K562 (cell line): ENCODE measurements at regions of chrX and their contacts with region 1.

Region 1: GRCh38 chrX:11151799-11152559 is 40.8 kb downstream of the HCCS start:
- DNase-seq: no peak
- ATAC-seq: peak; percentile 68
- H3K4me3 ChIP-seq: no peak overlapping the region
- H3K27ac ChIP-seq: no peak overlapping the region
- H3K4me1 ChIP-seq: no peaks in the 10 kb centered on the region; a peak in 1 of 5 replicates
- H3K27me3 ChIP-seq: no peaks in the 10 kb centered on the region
- CTCF ChIP-seq: no peak
- EP300 ChIP-seq: no peak
- POLR2A ChIP-seq: no peak
- RAD21 ChIP-seq: no peak

Region 2: DNA sequence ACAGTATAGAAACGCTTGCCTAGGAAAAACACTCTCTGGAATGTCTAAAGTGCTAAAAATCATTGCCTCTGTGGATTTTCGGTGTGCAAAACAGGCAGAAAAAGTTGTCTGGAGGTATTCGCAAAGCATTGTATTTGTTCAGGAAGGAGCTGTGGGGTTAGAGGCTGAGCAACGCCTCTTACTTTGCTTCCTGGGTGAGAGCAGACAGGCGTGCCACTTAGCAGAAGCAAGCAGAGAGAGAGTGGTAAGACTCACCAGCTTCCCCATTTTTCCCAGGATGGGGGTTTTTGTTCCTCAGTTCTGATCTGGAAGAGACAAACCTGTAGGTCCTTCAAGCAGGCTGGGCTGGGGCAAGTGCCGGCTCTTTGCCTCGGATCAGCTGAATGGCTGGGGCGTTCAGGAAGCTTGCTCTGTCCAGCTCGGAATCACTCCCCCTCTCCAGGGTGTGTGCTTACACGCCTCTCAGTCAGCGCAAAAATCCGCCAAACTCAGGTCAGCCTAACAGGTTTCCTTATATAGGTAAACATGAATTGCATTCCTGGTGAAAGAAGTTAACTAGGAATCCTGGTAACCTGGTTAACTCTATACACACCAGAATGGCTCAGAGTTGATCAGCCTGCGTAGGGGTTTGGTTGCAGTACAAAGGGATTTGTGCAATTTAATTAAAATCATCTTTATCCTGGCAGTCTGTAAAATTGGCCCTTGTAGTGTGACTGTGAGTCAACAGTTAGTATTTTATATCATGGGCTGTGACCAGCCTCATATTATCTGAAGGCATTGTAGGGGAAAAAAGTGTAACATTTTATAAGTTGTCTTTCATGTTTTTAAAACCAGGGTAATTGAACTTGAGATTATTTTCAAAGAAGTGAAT is 318.4 kb before region 1 on chrX:
- CTCF ChIA-PET with region 1: no interaction called
- POLR2A ChIA-PET with region 1: no interaction called
- in situ Hi-C with region 1: no loop called
- intact Hi-C with region 1: no loop called
- DNase-seq: peak in 2 of 4 experiments; percentile 14 to 27
- ATAC-seq: peak; percentile 90
- H3K4me3 ChIP-seq: no peak overlapping the region
- H3K27ac ChIP-seq: no peak overlapping the region
- H3K4me1 ChIP-seq: peaks cover 0 to 2% of the 10 kb centered on the region in 2 experiments; a peak in 1 of 5 replicates
- H3K27me3 ChIP-seq: no peaks in the 10 kb centered on the region
- CTCF ChIP-seq: no peak
- EP300 ChIP-seq: no peak
- POLR2A ChIP-seq: no peak
- RAD21 ChIP-seq: no peak

Region 3: GRCh38 chrX:11261260-11261659 is 109.3 kb after region 1 on chrX:
- CTCF ChIA-PET with region 1: no interaction called
- POLR2A ChIA-PET with region 1: no interaction called
- in situ Hi-C with region 1: no loop called
- intact Hi-C with region 1: loop called (anchors 10 kb)
- DNase-seq: no peak
- ATAC-seq: no peak
- H3K4me3 ChIP-seq: no peak overlapping the region
- H3K27ac ChIP-seq: no peak overlapping the region
- H3K4me1 ChIP-seq: peaks cover 9 to 46% of the 10 kb centered on the region in 2 experiments; a peak in 4 of 5 replicates
- H3K27me3 ChIP-seq: no peaks in the 10 kb centered on the region
- CTCF ChIP-seq: no peak
- EP300 ChIP-seq: no peak
- POLR2A ChIP-seq: no peak
- RAD21 ChIP-seq: no peak